Esophagus muscularis mucosa (tissue), 4 donors: ENCODE measurements at regions of chr19 and their contacts with region 1.

Region 1: DNA sequence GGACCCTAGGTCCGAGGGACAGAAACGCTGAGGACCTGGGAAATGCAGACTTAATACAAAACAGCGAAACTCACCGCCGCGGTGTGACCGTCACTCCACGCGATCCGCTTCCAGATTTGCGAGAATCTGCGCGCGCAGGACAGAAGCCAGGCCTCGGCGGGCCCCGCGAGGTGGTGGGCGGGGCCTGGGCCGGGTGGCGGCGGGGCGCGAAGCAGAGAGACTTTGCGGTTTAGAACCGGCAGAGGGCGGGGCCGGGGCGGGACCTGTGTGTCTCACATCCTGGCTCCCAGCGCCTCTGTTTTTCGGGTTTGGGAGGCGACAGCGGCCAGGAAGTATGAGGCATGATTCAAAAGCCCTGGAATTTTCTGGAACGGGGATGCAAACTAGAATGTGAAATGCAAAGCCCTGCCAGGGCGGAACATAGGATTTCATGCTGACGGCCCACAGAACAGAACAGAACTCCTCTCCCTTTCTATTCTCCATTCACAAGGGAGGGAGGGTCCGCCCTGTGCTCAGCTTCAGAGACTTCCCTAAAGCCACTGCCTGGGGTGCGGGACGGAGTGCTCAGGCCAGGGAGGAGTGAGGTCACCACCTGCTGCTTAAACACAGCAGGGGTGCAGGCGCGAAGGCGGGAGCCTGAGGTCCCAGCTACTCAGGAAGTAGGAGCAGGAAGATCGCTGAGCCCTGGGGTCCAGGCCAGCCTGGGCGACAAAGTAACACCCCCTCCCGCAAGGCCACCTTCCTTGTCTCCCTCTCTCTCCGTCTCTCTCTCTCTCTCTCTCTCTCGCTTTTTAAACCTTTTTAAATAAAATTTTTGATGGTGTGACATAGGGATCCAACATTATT is 44.3 kb downstream of the ZNF611 start:
- DNase-seq: peak; percentile 98
- H3K4me3 ChIP-seq: peak overlapping the region; percentile 64 to 82 (median 68)
- H3K27ac ChIP-seq: peak overlapping the region; percentile 85 to 94 (median 93)
- H3K4me1 ChIP-seq: peaks cover 12 to 47% (median 35%) of the 10 kb centered on the region in 4 donors
- H3K27me3 ChIP-seq: no peaks in the 10 kb centered on the region
- CTCF ChIP-seq: peak; percentile 27 to 45 (median 28)
- EP300 ChIP-seq: no peak
- POLR2A ChIP-seq: peak; percentile 19

Region 2: DNA sequence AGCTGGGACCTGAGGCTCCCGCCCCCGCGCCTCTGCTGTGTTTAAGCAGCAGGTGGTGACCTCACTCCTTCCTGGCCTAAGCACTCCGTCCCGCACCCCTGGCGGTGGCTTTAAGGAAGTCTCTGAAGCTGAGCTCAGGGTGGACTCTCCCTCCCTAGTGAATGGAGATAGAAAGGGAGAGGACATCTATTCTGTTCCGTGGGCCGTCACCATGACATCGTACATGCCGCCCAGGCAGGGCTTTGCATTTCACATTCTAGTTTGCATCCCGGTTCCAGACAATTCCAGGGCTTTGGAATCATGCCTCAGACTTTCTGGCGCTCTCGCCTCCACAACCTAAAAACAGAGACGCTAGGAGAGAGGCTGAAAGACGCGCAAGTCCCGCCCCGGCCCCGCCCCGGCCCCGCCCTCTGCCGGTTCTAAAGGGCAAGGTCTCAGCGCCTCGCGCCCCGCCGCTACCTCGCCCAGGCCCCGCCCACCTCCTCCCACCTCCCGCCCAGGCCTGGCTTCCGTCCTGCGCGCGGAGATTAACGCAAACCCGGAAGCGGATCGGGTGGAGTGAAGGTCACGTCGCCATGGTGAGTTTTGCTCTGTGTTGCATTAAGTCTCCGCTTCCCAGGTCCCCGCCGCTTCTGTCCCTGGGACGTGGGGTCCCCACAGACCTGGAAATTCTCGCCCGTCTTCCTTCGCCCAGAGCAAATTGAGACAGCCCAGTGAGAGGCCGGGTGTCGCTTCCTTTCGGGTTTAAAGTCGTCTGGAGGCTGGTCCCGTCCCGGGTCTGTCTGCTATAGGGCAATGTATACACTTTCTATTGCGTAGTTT is 163.2 kb before region 1 on chr19 and contains the start of gene ZNF808:
- intact Hi-C with region 1: loop called (anchors 5 kb)
- DNase-seq: peak; percentile 99
- H3K4me3 ChIP-seq: peak within 1 kb of the TSS; percentile 68 to 81 (median 74)
- H3K27ac ChIP-seq: peak within 1 kb of the TSS; percentile 83 to 95 (median 92)
- H3K4me1 ChIP-seq: peaks cover 12 to 27% (median 16%) of the 10 kb centered on the region in 4 donors
- H3K27me3 ChIP-seq: no peaks in the 10 kb centered on the region
- CTCF ChIP-seq: peak; percentile 49 to 70 (median 70)
- EP300 ChIP-seq: no peak
- POLR2A ChIP-seq: no peak
- total RNA-seq, gene ZNF808: 11.3 to 18.7 (median 14.2) TPM

Region 3: GRCh38 chr19:52626915-52627314 is 63.7 kb before region 1 on chr19:
- intact Hi-C with region 1: no loop called
- DNase-seq: no peak
- H3K4me3 ChIP-seq: no peak overlapping the region
- H3K27ac ChIP-seq: no peak overlapping the region
- H3K4me1 ChIP-seq: no peaks in the 10 kb centered on the region
- H3K27me3 ChIP-seq: no peaks in the 10 kb centered on the region
- CTCF ChIP-seq: no peak
- EP300 ChIP-seq: no peak
- POLR2A ChIP-seq: no peak

Region 4: GRCh38 chr19:52637718-52638585 is 52.6 kb before region 1 on chr19 and contains the start of gene ZNF83:
- intact Hi-C with region 1: loop called (anchors 2 kb)
- DNase-seq: peak; percentile 99
- H3K4me3 ChIP-seq: peak within 1 kb of the TSS; percentile 65 to 76 (median 74)
- H3K27ac ChIP-seq: peak within 1 kb of the TSS; percentile 68 to 94 (median 86)
- H3K4me1 ChIP-seq: peaks cover 13 to 21% (median 19%) of the 10 kb centered on the region in 4 donors
- H3K27me3 ChIP-seq: no peaks in the 10 kb centered on the region
- CTCF ChIP-seq: peak in 1 of 3 experiments; percentile 12
- EP300 ChIP-seq: no peak
- POLR2A ChIP-seq: no peak
- total RNA-seq, gene ZNF83: 29.7 to 55.6 (median 34.1) TPM

Region 5: GRCh38 chr19:52734893-52735661 is 44.5 kb after region 1 on chr19 and contains the start of gene ZNF611:
- intact Hi-C with region 1: loop called (anchors 5 kb)
- DNase-seq: peak; percentile 100
- H3K4me3 ChIP-seq: peak within 1 kb of the TSS; percentile 64 to 83 (median 74)
- H3K27ac ChIP-seq: peak within 1 kb of the TSS; percentile 74 to 92 (median 86)
- H3K4me1 ChIP-seq: peaks cover 22 to 31% (median 28%) of the 10 kb centered on the region in 4 donors
- H3K27me3 ChIP-seq: no peaks in the 10 kb centered on the region
- CTCF ChIP-seq: peak; percentile 52 to 70 (median 67)
- EP300 ChIP-seq: no peak
- POLR2A ChIP-seq: peak; percentile 63
- total RNA-seq, gene ZNF611: 7.3 to 9.6 (median 7.6) TPM